CD4-positive, alpha-beta memory T cell (primary cell): ENCODE measurements at regions of chr2 and their contacts with region 1.

Region 1: GRCh38 chr2:200713003-200713703 is 98.6 kb upstream of the BZW1 start:
- DNase-seq: peak; percentile 92 to 98 (median 95)
- H3K4me3 ChIP-seq: peak overlapping the region in 1 of 2 donors; percentile 35
- H3K4me3 Mint-ChIP-seq: peak overlapping the region; percentile 78 to 86 (median 84)
- H3K27ac ChIP-seq: peak overlapping the region; percentile 78
- H3K27ac Mint-ChIP-seq: peak overlapping the region; percentile 98 to 99 (median 98)
- H3K4me1 ChIP-seq: peaks cover 14% of the 10 kb centered on the region
- H3K4me1 Mint-ChIP-seq: peaks cover 8 to 13% (median 11%) of the 10 kb centered on the region in 4 donors
- H3K27me3 ChIP-seq: no peaks in the 10 kb centered on the region
- H3K27me3 Mint-ChIP-seq: no peaks in the 10 kb centered on the region

Region 2: DNA sequence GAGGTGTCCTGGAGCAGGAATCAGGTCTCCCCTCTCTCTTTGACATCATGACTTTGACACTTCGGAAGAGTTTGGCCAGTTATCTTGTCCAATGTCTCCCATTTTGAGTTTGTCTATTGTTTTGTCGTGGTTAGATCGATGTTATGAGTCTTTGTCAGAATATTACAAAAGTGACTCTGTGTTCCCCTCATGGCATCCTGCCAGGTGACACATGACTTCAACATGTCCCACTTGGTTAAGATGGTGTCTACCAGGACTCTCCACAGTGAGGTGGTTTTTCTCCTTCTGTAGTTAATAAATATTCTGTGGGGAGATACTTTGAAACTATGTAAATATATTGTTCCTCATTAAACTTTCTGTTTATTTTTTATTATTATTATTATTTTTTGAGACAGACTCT is 21.9 kb after region 1 on chr2:
- CTCF ChIA-PET with region 1: interaction called, 9 read pairs
- POLR2A ChIA-PET with region 1: no interaction called
- intact Hi-C with region 1: loop called (anchors 1 kb)
- DNase-seq: no peak
- H3K4me3 ChIP-seq: no peak overlapping the region
- H3K4me3 Mint-ChIP-seq: no peak overlapping the region
- H3K27ac ChIP-seq: no peak overlapping the region
- H3K27ac Mint-ChIP-seq: peak overlapping the region in 1 of 7 donors; percentile 3
- H3K4me1 ChIP-seq: no peaks in the 10 kb centered on the region
- H3K4me1 Mint-ChIP-seq: no peaks in the 10 kb centered on the region
- H3K27me3 ChIP-seq: no peaks in the 10 kb centered on the region
- H3K27me3 Mint-ChIP-seq: peaks cover 11 to 12% of the 10 kb centered on the region in 2 donors

Region 3: GRCh38 chr2:200888704-200889625 is 175.8 kb after region 1 on chr2 and contains the starts of genes NIF3L1 and PPIL3:
- CTCF ChIA-PET with region 1: interaction called, 3 read pairs
- POLR2A ChIA-PET with region 1: interaction called, 36 read pairs
- intact Hi-C with region 1: loop called (anchors 1 kb)
- DNase-seq: peak; percentile 96 to 98 (median 96)
- H3K4me3 ChIP-seq: peak within 1 kb of the TSS; percentile 91 to 92
- H3K4me3 Mint-ChIP-seq: peak within 1 kb of the TSS; percentile 90 to 98 (median 96)
- H3K27ac ChIP-seq: peak within 1 kb of the TSS; percentile 85
- H3K27ac Mint-ChIP-seq: peak within 1 kb of the TSS; percentile 98 to 100 (median 99)
- H3K4me1 ChIP-seq: peaks cover 31% of the 10 kb centered on the region
- H3K4me1 Mint-ChIP-seq: peaks cover 30 to 57% (median 45%) of the 10 kb centered on the region in 4 donors
- H3K27me3 ChIP-seq: no peaks in the 10 kb centered on the region
- H3K27me3 Mint-ChIP-seq: no peaks in the 10 kb centered on the region
- total RNA-seq, gene NIF3L1: 30.0 to 30.3 TPM
- total RNA-seq, gene PPIL3: 48.0 to 57.7 TPM

Region 4: DNA sequence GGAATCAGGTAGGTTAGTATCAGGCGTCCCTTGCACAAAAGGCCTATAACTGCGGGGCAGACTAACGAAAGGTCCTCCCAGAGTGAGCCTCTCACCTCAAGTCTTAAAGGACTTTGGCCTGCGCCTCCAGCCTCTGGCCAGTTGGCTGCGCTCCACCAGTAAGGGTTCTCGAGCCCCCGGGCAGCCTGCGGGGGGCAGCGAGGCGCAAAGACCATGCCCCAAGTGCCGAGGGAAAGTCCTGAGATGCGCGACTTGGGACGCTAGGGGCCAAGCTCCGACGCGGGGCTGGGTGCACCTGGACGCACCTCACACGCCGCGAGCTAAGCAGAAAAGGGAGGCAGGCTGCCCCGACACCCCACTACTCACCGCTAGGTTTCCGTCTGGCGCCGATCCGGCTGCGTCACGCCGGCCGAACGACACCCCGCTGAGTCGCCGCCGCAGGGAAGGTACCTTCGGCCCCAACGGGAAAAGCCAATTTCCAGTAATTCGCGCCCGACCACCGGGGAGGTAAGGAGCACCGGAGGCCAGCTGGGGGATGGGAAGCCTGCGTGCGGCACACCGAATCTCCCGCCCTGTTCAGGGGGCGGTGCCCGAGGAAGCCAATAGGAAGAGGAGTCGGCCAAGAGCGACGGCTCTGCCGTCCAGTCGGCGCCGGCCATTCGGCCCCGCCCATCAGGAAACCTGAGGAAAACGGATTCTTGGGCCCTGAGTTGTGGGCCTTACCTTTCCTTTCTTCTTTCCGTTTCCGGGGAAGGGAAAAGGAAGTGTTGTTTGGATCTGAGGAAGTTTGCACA is 250.2 kb after region 1 on chr2 and contains the start of gene ORC2:
- CTCF ChIA-PET with region 1: interaction called, 6 read pairs
- POLR2A ChIA-PET with region 1: interaction called, 4 read pairs
- intact Hi-C with region 1: loop called (anchors 1 kb)
- DNase-seq: peak; percentile 93 to 97 (median 94)
- H3K4me3 ChIP-seq: peak within 1 kb of the TSS; percentile 87 to 95
- H3K4me3 Mint-ChIP-seq: peak within 1 kb of the TSS; percentile 96 to 99 (median 98)
- H3K27ac ChIP-seq: peak within 1 kb of the TSS; percentile 79
- H3K27ac Mint-ChIP-seq: peak within 1 kb of the TSS; percentile 98 to 100 (median 99)
- H3K4me1 ChIP-seq: peaks cover 47% of the 10 kb centered on the region
- H3K4me1 Mint-ChIP-seq: peaks cover 35 to 73% (median 56%) of the 10 kb centered on the region in 4 donors
- H3K27me3 ChIP-seq: no peaks in the 10 kb centered on the region
- H3K27me3 Mint-ChIP-seq: no peaks in the 10 kb centered on the region
- total RNA-seq, gene ORC2: 72.2 to 76.4 TPM

Region 5: DNA sequence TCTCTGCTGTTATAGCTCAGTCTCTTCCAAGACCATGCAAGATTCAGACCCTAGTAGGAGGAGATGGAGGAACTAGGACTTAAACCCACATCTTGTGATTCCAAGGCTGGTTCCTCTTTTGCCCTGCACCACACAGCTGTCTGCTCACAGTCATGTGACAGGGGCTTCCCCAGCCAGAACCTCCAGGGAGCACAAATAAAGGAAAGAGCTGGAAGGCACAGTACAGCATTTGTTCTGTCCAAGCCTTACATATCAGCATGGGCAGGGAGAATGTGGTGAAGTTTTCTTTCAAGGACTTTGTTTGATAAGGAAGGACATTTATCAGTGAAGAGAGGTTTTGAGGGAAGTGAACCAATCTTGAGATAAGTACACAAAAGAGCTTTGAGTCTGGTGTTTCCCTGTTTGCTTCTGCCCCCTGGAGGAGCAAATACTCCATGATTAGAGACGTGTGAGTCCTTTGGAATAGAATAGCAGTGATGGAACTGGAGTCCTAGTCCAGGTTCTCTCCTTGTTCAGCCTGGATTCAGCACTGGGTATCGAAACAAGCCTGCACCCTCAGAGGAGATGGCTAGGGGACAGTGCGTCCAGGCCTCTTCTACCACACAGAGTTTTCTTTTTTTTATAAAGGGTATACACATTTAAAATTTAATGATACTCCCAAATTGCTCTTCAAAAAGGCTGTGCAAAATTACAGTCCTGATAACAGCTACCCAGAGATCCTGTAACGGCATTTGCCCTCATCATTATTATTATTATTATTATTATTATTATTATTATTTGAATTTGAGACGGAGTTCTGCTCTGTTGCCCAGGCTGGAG is 445.2 kb after region 1 on chr2:
- CTCF ChIA-PET with region 1: interaction called, 5 read pairs
- POLR2A ChIA-PET with region 1: no interaction called
- intact Hi-C with region 1: loop called (anchors 1 kb)
- DNase-seq: peak; percentile 64 to 75 (median 68)
- H3K4me3 ChIP-seq: no peak overlapping the region
- H3K4me3 Mint-ChIP-seq: peak overlapping the region in 3 of 8 donors; percentile 26 to 52 (median 30)
- H3K27ac ChIP-seq: peak overlapping the region; percentile 44
- H3K27ac Mint-ChIP-seq: peak overlapping the region; percentile 69 to 95 (median 89)
- H3K4me1 ChIP-seq: peaks cover 19% of the 10 kb centered on the region
- H3K4me1 Mint-ChIP-seq: peaks cover 9 to 23% (median 16%) of the 10 kb centered on the region in 4 donors
- H3K27me3 ChIP-seq: no peaks in the 10 kb centered on the region
- H3K27me3 Mint-ChIP-seq: no peaks in the 10 kb centered on the region

Region 6: DNA sequence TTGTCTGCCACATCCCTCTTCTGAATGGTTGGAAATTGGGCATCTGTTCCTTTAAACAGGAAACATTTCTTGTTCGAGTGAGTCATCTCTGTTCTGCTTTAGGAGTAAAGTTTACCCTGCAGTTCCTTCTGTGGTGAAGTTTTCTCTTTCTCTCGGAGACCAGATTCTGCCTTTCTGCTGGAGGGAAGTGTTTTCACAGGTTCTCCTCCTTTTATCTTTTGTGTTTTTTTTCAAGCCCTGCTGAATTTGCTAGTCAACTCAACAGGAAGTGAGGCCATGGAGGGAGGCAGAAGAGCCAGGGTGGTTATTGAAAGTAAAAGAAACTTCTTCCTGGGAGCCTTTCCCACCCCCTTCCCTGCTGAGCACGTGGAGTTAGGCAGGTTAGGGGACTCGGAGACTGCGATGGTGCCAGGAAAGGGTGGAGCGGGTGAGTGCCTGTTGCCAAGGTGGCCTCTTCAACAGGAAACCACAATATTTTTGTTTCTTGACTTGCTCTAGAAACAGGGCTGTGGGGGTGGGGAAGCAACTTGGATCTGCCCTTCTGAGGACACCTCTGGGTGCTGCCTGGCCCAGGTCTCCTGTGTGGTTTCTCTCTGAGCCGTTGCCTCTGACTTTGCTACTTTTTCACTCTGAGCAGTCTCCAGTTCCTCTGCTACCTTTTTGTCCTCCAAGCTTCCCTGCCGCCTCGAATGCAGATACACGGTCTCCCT is 545.0 kb after region 1 on chr2:
- CTCF ChIA-PET with region 1: no interaction called
- POLR2A ChIA-PET with region 1: interaction called, 3 read pairs
- intact Hi-C with region 1: loop called (anchors 1 kb)
- DNase-seq: peak; percentile 95 to 99 (median 98)
- H3K4me3 ChIP-seq: peak overlapping the region; percentile 57 to 58
- H3K4me3 Mint-ChIP-seq: peak overlapping the region; percentile 89 to 93 (median 92)
- H3K27ac ChIP-seq: peak overlapping the region; percentile 86
- H3K27ac Mint-ChIP-seq: peak overlapping the region; percentile 95 to 100 (median 99)
- H3K4me1 ChIP-seq: peaks cover 79% of the 10 kb centered on the region
- H3K4me1 Mint-ChIP-seq: peaks cover 40 to 81% (median 61%) of the 10 kb centered on the region in 4 donors
- H3K27me3 ChIP-seq: no peaks in the 10 kb centered on the region
- H3K27me3 Mint-ChIP-seq: no peaks in the 10 kb centered on the region